ENCODE measurements at regions of chr19 and their contacts with region 1.

Region 1: DNA sequence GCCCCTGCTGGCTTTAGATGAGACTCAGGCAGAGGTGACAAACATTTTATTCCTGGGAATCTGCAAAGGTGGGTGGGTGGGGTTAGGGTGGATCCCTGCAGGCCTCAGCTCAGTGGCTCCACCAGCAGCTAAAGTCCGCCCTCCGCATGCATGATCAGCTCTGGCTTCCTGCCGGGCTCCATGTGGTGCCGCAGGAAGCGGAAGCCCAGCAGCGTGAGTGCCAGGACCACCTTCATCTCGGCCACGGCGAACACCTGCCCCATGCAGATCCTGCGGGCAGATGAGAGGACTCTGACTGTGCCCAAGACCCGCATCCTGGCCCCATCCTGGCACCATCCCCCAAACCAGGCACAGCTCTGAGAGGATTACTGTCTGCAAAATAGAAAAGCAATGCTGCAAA is 26.3 kb downstream of the CYP4F2 start:
- DNase-seq: no peak
- ATAC-seq: no peak
- H3K4me3 ChIP-seq: no peak overlapping the region
- H3K27ac ChIP-seq: no peak overlapping the region
- H3K4me1 ChIP-seq: no peaks in the 10 kb centered on the region
- H3K27me3 ChIP-seq: no peaks in the 10 kb centered on the region
- CTCF ChIP-seq: no peak
- POLR2A ChIP-seq: no peak

Region 2: DNA sequence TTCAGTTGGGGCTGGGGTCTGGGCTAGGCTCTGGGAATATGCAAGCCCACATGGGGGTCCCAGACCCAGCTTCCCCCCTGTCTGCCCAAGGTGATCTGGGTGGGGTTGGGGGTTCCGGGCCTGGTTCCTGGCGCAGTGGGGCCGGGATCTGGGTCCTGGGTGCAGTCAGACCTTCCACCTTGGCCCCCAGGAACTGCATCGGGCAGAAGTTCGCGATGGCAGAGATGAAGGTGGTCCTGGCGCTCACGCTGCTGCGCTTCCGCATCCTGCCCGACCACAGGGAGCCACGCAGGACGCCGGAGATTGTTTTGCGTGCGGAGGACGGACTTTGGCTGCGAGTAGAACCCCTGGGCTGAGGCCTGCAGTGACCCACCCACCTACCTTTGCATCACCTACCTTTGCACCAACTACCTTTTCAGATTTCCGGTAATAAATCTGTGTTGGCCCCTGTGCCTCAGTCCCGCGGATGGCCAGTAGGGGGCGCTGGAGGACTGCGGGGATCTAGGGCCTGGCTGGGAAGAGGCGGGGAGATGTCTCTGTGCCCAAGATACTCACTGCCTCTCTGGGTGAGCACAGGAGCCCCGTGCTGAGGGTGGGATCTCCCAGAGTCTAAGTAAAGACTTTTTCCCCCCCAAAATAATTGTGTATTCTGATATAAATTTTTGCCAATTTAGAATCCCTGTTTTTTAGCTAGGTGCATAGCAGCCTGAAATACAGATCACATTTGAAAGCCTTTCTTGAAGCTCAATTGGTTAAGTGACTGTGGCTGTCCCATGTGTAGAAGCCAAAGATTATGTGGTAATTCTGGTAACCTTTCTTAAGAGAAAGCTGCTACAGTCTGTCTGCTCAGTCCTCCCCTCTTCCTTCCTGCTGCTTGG is 242.3 kb before region 1 on chr19:
- in situ Hi-C with region 1: loop called in 1 of 4 experiments (anchors 10 kb)
- intact Hi-C with region 1: no loop called
- DNase-seq: peak; percentile 11 to 17
- ATAC-seq: no peak
- H3K4me3 ChIP-seq: no peak overlapping the region
- H3K27ac ChIP-seq: no peak overlapping the region
- H3K4me1 ChIP-seq: no peaks in the 10 kb centered on the region
- H3K27me3 ChIP-seq: peaks cover 0 to 13% (median 5%) of the 10 kb centered on the region in 3 donors
- CTCF ChIP-seq: peak; percentile 55 to 79 (median 77)
- POLR2A ChIP-seq: no peak

Measured in gastrocnemius medialis (tissue), 4 donors.